B cell (primary cell): ENCODE measurements at regions of chr10 and their contacts with region 1.

Region 1: DNA sequence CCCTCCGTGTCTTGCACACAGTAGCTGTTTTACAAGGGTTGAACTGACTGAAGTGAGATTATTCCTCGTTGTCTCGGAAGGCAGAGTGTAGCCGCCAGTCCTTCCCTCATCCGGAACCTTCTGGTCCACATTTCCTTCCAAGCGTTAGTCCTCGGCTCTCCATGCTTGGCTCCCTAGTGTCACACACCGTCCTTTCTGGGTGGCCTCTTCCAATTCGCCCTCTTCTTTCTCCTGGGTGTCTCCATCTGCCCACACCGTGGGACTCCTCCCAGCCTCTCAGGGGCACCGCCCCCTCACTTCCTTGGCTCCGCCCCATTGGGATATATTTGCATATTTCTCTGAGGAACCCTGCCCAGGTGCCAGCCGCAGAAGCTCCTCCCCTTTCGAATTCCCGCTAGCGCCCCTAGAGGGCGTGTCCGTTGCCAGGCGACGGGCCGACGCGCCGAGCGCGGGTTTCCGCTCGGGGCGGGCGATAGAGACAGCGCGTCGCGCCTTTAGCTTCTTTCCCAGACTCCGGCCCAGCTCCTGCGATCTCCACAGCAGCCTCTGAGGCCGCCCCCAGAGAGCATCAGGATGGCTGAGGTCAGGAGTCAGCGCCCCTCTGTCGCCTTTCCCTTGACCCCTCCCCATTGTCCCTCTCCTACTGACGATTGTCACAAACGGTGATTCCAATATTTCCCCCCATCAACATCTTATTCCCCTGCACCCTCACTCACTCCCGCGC is at the start of gene CFAP58:
- DNase-seq: peak; percentile 95
- ATAC-seq: peak; percentile 87
- H3K4me3 ChIP-seq: peak within 1 kb of the TSS; percentile 46 to 66 (median 51)
- H3K4me3 Mint-ChIP-seq: peak within 1 kb of the TSS; percentile 52
- H3K27ac ChIP-seq: peak within 1 kb of the TSS; percentile 20 to 23
- H3K27ac Mint-ChIP-seq: peak within 1 kb of the TSS; percentile 64
- H3K4me1 ChIP-seq: peaks cover 32 to 43% of the 10 kb centered on the region in 2 donors
- H3K4me1 Mint-ChIP-seq: peaks cover 19% of the 10 kb centered on the region
- H3K27me3 ChIP-seq: peaks cover 0 to 5% (median 0%) of the 10 kb centered on the region in 4 experiments
- H3K27me3 Mint-ChIP-seq: no peaks in the 10 kb centered on the region
- CTCF ChIP-seq: peak; percentile 79
- total RNA-seq, gene CFAP58: not detected in 2 replicates

Region 2: GRCh38 chr10:104268716-104269645 is 84.5 kb before region 1 on chr10 and contains the start of gene GSTO2:
- CTCF ChIA-PET with region 1: interaction called, 64 read pairs
- POLR2A ChIA-PET with region 1: no interaction called
- intact Hi-C with region 1: loop called (anchors 1 kb)
- DNase-seq: peak; percentile 99
- ATAC-seq: peak; percentile 97
- H3K4me3 ChIP-seq: peak within 1 kb of the TSS; percentile 68 to 90 (median 86)
- H3K4me3 Mint-ChIP-seq: peak within 1 kb of the TSS; percentile 88
- H3K27ac ChIP-seq: peak within 1 kb of the TSS; percentile 90 to 95
- H3K27ac Mint-ChIP-seq: peak within 1 kb of the TSS; percentile 92
- H3K4me1 ChIP-seq: peaks cover 20 to 22% of the 10 kb centered on the region in 2 donors
- H3K4me1 Mint-ChIP-seq: peaks cover 37% of the 10 kb centered on the region
- H3K27me3 ChIP-seq: peaks cover 0 to 1% (median under 1%) of the 10 kb centered on the region in 4 experiments
- H3K27me3 Mint-ChIP-seq: no peaks in the 10 kb centered on the region
- CTCF ChIP-seq: no peak
- total RNA-seq, gene GSTO2: 0.89 and 1.4 TPM in 2 replicates

Region 3: DNA sequence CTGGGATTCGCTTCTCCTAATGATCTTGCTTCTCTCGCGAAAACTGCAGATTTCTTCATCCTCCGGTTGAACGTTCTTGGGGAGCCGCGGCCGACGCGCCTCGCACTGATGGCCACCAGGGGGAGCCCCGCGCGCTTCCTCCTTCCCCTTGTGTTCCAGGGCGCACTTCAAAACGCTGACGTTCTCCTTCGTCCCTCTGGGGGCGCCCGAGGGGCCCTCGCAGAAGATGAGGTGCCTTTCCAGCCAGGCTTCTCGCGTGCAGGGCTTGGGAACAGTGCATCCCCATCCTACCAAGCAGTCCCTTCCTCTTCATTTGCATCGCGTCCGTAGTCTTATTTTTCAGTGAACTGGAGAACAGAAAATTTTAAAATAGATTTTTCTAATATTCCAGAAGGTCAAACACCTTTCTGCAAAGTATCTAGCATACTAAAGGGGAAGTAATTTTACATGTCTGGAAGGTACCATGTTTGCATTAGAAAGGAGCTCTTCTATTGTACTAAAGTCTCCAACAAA is 62.0 kb before region 1 on chr10:
- CTCF ChIA-PET with region 1: interaction called, 221 read pairs
- POLR2A ChIA-PET with region 1: interaction called, 3 read pairs
- intact Hi-C with region 1: loop called (anchors 1 kb)
- DNase-seq: peak; percentile 91
- ATAC-seq: peak; percentile 100
- H3K4me3 ChIP-seq: no peak overlapping the region
- H3K4me3 Mint-ChIP-seq: peak overlapping the region; percentile 44
- H3K27ac ChIP-seq: no peak overlapping the region
- H3K27ac Mint-ChIP-seq: peak overlapping the region; percentile 28
- H3K4me1 ChIP-seq: peaks cover 4 to 8% of the 10 kb centered on the region in 2 donors
- H3K4me1 Mint-ChIP-seq: peaks cover 5% of the 10 kb centered on the region
- H3K27me3 ChIP-seq: peaks cover 0 to 16% (median 6%) of the 10 kb centered on the region in 4 experiments
- H3K27me3 Mint-ChIP-seq: peaks cover 34% of the 10 kb centered on the region
- CTCF ChIP-seq: peak; percentile 100

Region 4: GRCh38 chr10:104308439-104308903 is 45.0 kb before region 1 on chr10:
- CTCF ChIA-PET with region 1: interaction called, 594 read pairs
- POLR2A ChIA-PET with region 1: interaction called, 8 read pairs
- intact Hi-C with region 1: loop called (anchors 1 kb)
- DNase-seq: no peak
- ATAC-seq: no peak
- H3K4me3 ChIP-seq: no peak overlapping the region
- H3K4me3 Mint-ChIP-seq: no peak overlapping the region
- H3K27ac ChIP-seq: peak overlapping the region in 1 of 2 donors; percentile 49
- H3K27ac Mint-ChIP-seq: peak overlapping the region; percentile 76
- H3K4me1 ChIP-seq: peaks cover 13 to 21% of the 10 kb centered on the region in 2 donors
- H3K4me1 Mint-ChIP-seq: peaks cover 23% of the 10 kb centered on the region
- H3K27me3 ChIP-seq: no peaks in the 10 kb centered on the region
- H3K27me3 Mint-ChIP-seq: no peaks in the 10 kb centered on the region
- CTCF ChIP-seq: no peak

Region 5: GRCh38 chr10:104328896-104329710 is 24.4 kb before region 1 on chr10:
- CTCF ChIA-PET with region 1: interaction called, 594 read pairs
- POLR2A ChIA-PET with region 1: interaction called, 3 read pairs
- intact Hi-C with region 1: no loop called
- DNase-seq: peak; percentile 86
- ATAC-seq: peak; percentile 82
- H3K4me3 ChIP-seq: peak overlapping the region in 4 of 5 experiments; percentile 5 to 24 (median 20)
- H3K4me3 Mint-ChIP-seq: peak overlapping the region; percentile 82
- H3K27ac ChIP-seq: peak overlapping the region; percentile 50 to 58
- H3K27ac Mint-ChIP-seq: peak overlapping the region; percentile 89
- H3K4me1 ChIP-seq: peaks cover 78 to 92% of the 10 kb centered on the region in 2 donors
- H3K4me1 Mint-ChIP-seq: peaks cover 98% of the 10 kb centered on the region
- H3K27me3 ChIP-seq: no peaks in the 10 kb centered on the region
- H3K27me3 Mint-ChIP-seq: no peaks in the 10 kb centered on the region
- CTCF ChIP-seq: no peak